ENCODE measurements at regions of chr1 and their contacts with region 1.

Region 1: GRCh38 chr1:117077267-117077666 is 17.1 kb downstream of the TTF2 start:
- DNase-seq: no peak
- ATAC-seq: no peak
- H3K4me3 ChIP-seq: no peak overlapping the region
- H3K27ac ChIP-seq: no peak overlapping the region
- H3K4me1 ChIP-seq: peaks cover 0 to 9% (median 0%) of the 10 kb centered on the region in 9 donors
- H3K27me3 ChIP-seq: no peaks in the 10 kb centered on the region
- CTCF ChIP-seq: no peak

Region 2: DNA sequence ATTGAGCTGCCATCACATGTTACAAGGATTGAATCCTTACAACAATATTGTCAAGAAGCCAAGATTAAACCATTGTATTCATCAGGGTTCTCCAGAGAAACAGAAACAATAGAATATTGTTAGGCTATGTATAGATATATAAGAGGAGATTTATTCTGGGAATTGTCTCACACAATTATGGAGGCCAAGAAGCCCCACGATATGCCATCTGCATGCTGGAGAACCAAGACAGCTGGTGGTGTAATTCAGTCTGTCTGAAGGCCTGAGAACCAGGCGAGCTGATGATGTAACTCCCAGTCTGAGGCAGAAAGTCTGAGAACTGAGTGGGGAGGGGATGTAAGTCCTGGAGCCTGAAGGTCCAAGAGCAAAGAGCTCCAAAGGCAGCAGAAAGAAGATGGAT is 31.6 kb before region 1 on chr1:
- intact Hi-C with region 1: no loop called
- DNase-seq: no peak
- ATAC-seq: no peak
- H3K4me3 ChIP-seq: no peak overlapping the region
- H3K27ac ChIP-seq: peak overlapping the region in 1 of 10 donors; percentile 25
- H3K4me1 ChIP-seq: peaks cover 0 to 21% (median 0%) of the 10 kb centered on the region in 9 donors
- H3K27me3 ChIP-seq: no peaks in the 10 kb centered on the region
- CTCF ChIP-seq: no peak

Region 3: GRCh38 chr1:117114877-117115276 is 37.6 kb after region 1 on chr1:
- intact Hi-C with region 1: loop called in 2 of 10 experiments (anchors 5 to 10 kb)
- DNase-seq: no peak
- ATAC-seq: no peak
- H3K4me3 ChIP-seq: no peak overlapping the region
- H3K27ac ChIP-seq: no peak overlapping the region
- H3K4me1 ChIP-seq: peaks cover 0 to 23% (median 8%) of the 10 kb centered on the region in 9 donors
- H3K27me3 ChIP-seq: no peaks in the 10 kb centered on the region
- CTCF ChIP-seq: no peak

Measured in heart right ventricle (tissue), 16 donors.